ENCODE measurements at regions of chr1 and their contacts with region 1.

Region 1: DNA sequence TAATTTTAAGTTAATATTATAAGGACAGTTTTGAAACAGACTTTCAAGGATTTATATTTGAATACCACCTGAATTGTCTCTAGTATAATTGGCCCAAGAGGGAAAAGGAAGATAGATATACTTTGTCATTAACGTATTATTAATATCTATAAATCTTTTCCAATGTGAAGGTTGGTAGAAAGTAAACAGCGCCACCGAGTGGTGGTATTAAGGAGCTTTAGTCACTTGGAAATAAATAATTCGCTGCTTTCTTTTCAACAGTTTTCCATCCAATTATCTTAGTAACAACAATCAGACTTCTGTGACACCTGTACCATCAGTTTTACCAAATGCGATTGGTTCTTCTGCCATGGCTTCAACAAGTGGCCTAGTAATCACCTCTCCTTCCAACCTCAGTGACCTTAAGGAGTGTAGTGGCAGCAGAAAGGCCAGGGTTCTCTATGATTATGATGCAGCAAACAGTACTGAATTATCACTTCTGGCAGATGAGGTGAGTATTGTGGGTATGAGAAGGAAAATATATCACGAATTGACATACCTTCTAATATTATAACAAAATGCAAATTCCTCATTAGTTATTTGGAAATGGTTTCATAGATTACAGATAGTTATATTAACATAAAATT is 37.7 kb downstream of the SH3GLB1 start:
- DNase-seq: peak; percentile 67
- H3K4me3 ChIP-seq: no peak overlapping the region
- H3K27ac ChIP-seq: no peak overlapping the region
- H3K4me1 ChIP-seq: peaks cover 6% of the 10 kb centered on the region
- H3K27me3 ChIP-seq: no peaks in the 10 kb centered on the region
- CTCF ChIP-seq: peak; percentile 43 to 46
- POLR2A ChIP-seq: no peak

Region 2: GRCh38 chr1:86380257-86380861 is 361.7 kb before region 1 on chr1:
- CTCF ChIA-PET with region 1: interaction called, 13 read pairs
- POLR2A ChIA-PET with region 1: no interaction called
- dilution Hi-C with region 1: no loop called
- intact Hi-C with region 1: loop called (anchors 1 kb)
- DNase-seq: peak; percentile 82
- H3K4me3 ChIP-seq: no peak overlapping the region
- H3K27ac ChIP-seq: no peak overlapping the region
- H3K4me1 ChIP-seq: peaks cover 14% of the 10 kb centered on the region
- H3K27me3 ChIP-seq: no peaks in the 10 kb centered on the region
- CTCF ChIP-seq: peak; percentile 34 to 43
- POLR2A ChIP-seq: no peak

Region 3: DNA sequence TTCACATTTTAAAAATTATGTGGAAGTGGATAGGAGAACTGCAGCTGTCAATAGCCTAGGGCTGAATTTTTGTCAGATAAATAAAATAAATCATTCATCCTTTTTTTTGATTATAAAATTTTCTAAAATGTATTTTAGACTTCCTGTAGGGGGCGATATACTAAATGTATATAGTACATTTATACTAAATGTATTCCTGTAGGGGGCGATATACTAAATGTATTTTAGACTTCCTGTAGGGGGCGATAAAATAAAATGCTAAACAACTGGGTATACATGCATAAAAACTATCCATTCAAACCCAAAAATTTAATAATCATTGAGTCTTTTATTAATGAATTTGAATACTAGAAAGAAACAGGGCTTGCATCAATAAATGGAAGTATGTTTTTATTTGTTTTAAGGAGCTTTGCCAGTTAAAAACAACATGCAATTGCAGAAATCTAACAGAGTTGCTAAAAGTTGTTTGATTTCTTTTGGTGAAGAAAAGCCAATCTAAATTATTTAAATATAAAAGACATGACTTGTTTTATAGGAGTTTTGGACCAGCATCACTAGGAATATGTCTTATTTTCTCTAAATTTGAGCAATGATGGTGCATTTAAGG is 242.0 kb before region 1 on chr1:
- CTCF ChIA-PET with region 1: interaction called, 5 read pairs
- POLR2A ChIA-PET with region 1: no interaction called
- dilution Hi-C with region 1: no loop called
- intact Hi-C with region 1: loop called (anchors 2 kb)
- DNase-seq: peak; percentile 9
- H3K4me3 ChIP-seq: no peak overlapping the region
- H3K27ac ChIP-seq: no peak overlapping the region
- H3K4me1 ChIP-seq: no peaks in the 10 kb centered on the region
- H3K27me3 ChIP-seq: peaks cover 5 to 13% of the 10 kb centered on the region in 2 experiments
- CTCF ChIP-seq: peak; percentile 60 to 83
- POLR2A ChIP-seq: no peak

Region 4: GRCh38 chr1:86704458-86704971 is 37.5 kb before region 1 on chr1 and contains the start of gene SH3GLB1:
- CTCF ChIA-PET with region 1: interaction called, 27 read pairs
- POLR2A ChIA-PET with region 1: no interaction called
- dilution Hi-C with region 1: no loop called
- intact Hi-C with region 1: loop called (anchors 1 kb)
- DNase-seq: peak; percentile 91
- H3K4me3 ChIP-seq: peak within 1 kb of the TSS; percentile 88 to 96 (median 94)
- H3K27ac ChIP-seq: peak within 1 kb of the TSS; percentile 85
- H3K4me1 ChIP-seq: peaks cover 28% of the 10 kb centered on the region
- H3K27me3 ChIP-seq: no peaks in the 10 kb centered on the region
- CTCF ChIP-seq: peak; percentile 96
- POLR2A ChIP-seq: peak; percentile 78
- total RNA-seq, gene SH3GLB1: 140 and 148 TPM in 2 replicates

Region 5: GRCh38 chr1:86753700-86754099 is 11.6 kb after region 1 on chr1:
- CTCF ChIA-PET with region 1: interaction called, 13 read pairs
- POLR2A ChIA-PET with region 1: no interaction called
- dilution Hi-C with region 1: no loop called
- intact Hi-C with region 1: no loop called
- DNase-seq: peak; percentile 28
- H3K4me3 ChIP-seq: no peak overlapping the region
- H3K27ac ChIP-seq: no peak overlapping the region
- H3K4me1 ChIP-seq: no peaks in the 10 kb centered on the region
- H3K27me3 ChIP-seq: no peaks in the 10 kb centered on the region
- CTCF ChIP-seq: peak in 1 of 2 donors; percentile 15
- POLR2A ChIP-seq: no peak

Region 6: GRCh38 chr1:86866665-86867064 is 124.6 kb after region 1 on chr1:
- CTCF ChIA-PET with region 1: no interaction called
- POLR2A ChIA-PET with region 1: no interaction called
- dilution Hi-C with region 1: no loop called
- intact Hi-C with region 1: no loop called
- DNase-seq: no peak
- H3K4me3 ChIP-seq: no peak overlapping the region
- H3K27ac ChIP-seq: no peak overlapping the region
- H3K4me1 ChIP-seq: peaks cover 10% of the 10 kb centered on the region
- H3K27me3 ChIP-seq: no peaks in the 10 kb centered on the region
- CTCF ChIP-seq: no peak
- POLR2A ChIP-seq: no peak

Region 7: DNA sequence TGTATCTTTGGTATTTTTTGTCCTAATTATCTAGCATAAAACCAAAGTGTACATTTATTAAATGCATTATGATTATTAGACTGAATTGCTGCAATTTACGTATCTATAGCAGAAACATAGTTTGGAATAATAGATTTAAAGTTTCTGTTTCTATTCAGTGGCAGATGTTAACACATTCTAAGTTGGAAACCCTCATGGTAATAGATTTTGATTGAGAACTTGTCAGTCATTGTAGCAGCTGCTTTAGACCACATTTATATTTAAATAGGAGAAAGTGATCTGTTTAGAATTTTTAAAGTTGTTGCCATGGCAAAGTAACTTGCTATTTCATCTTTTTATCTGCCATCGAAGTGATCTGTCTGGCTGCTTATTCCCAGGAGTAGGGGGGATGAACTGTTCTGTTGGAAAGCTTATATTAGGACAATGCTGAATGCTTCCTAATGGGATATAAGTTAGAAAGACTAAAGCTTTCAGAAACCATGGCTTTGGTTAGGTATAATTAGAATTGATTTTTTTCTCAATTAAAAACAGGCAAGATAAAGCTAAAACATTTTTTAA is 234.0 kb after region 1 on chr1:
- CTCF ChIA-PET with region 1: no interaction called
- POLR2A ChIA-PET with region 1: no interaction called
- dilution Hi-C with region 1: no loop called
- intact Hi-C with region 1: no loop called
- DNase-seq: no peak
- H3K4me3 ChIP-seq: no peak overlapping the region
- H3K27ac ChIP-seq: no peak overlapping the region
- H3K4me1 ChIP-seq: no peaks in the 10 kb centered on the region
- H3K27me3 ChIP-seq: no peaks in the 10 kb centered on the region
- CTCF ChIP-seq: no peak
- POLR2A ChIP-seq: no peak

Measured in endothelial cell of umbilical vein (primary cell).